Naive thymus-derived CD8-positive, alpha-beta T cell (primary cell): ENCODE measurements at regions of chr3 and their contacts with region 1.

Region 1: GRCh38 chr3:120713262-120713661 is 29.1 kb downstream of the RABL3 start:
- DNase-seq: no peak
- ATAC-seq: no peak
- H3K4me3 Mint-ChIP-seq: no peak overlapping the region
- H3K27ac Mint-ChIP-seq: peak overlapping the region in 2 of 10 donors; percentile 13 to 51
- H3K4me1 Mint-ChIP-seq: peaks cover 12 to 24% (median 18%) of the 10 kb centered on the region in 4 donors
- H3K27me3 Mint-ChIP-seq: no peaks in the 10 kb centered on the region

Region 2: GRCh38 chr3:120596116-120596852 is 117.0 kb before region 1 on chr3 and contains the start of gene NDUFB4:
- POLR2A ChIA-PET with region 1: interaction called, 23 read pairs
- DNase-seq: peak; percentile 89 to 98 (median 94)
- ATAC-seq: peak; percentile 91 to 93
- H3K4me3 Mint-ChIP-seq: peak within 1 kb of the TSS in 9 of 10 donors; percentile 90 to 98 (median 95)
- H3K27ac Mint-ChIP-seq: peak within 1 kb of the TSS in 8 of 10 donors; percentile 96 to 99 (median 98)
- H3K4me1 Mint-ChIP-seq: peaks cover 9 to 15% (median 13%) of the 10 kb centered on the region in 4 donors
- H3K27me3 Mint-ChIP-seq: peaks cover 0 to 2% (median 0%) of the 10 kb centered on the region in 5 donors
- polyA plus RNA-seq, gene NDUFB4: 249 to 277 (median 277) TPM